Astrocyte of the cerebellum (primary cell): ENCODE measurements at regions of chr9 and their contacts with region 1.

Region 1: GRCh38 chr9:94076557-94076956 is 7.7 kb upstream of the PTPDC1 start:
- DNase-seq: peak; percentile 43
- H3K4me3 ChIP-seq: no peak overlapping the region
- CTCF ChIP-seq: no peak

Region 2: GRCh38 chr9:93820667-93821306 is 255.8 kb before region 1 on chr9:
- in situ Hi-C with region 1: no loop called
- DNase-seq: no peak
- H3K4me3 ChIP-seq: no peak overlapping the region
- CTCF ChIP-seq: no peak

Region 3: DNA sequence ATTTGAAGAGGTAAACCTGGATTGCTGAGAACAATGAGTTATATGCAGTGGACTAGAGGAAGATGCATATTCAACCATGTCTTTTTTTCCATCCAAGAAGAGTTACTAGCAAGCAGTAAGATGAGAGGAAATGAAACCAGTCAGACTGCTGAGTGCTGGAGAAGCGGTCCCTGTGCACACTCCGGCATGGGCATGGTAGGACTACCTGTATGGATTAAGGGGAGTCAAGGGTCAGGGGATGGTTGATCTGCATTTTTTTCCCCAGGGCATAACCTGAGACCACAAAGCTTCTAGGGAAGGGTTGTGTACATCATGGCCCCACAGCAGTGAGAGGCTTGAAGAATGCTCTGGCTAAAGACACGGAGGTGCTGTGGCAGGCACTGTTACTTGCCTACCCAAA is 106.0 kb after region 1 on chr9:
- in situ Hi-C with region 1: loop called (anchors 5 kb)
- DNase-seq: no peak
- H3K4me3 ChIP-seq: no peak overlapping the region
- CTCF ChIP-seq: no peak